ENCODE measurements at regions of chr2 and their contacts with region 1.

Region 1: DNA sequence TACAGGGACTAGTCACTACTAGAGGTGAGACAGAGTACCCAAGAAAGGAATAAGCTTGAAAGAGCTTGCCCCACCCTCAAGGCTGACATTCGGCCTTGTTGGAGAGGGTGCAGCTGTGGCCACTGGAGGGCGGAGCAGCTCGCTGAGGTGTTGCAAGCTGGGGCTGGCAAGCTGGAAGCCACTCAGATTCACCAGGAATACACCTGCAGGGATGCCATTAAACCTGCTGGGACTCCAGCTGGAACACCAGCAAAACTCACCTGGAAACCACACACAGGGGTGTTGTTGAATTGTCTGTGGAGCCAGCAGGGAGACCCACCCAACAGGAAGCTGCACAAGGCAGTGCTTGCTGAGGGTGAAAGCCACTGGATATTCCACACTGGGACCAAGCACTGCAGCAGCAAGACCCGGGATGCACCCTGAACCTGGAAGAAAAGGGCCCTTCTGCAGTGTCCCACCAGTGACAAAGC is 26.1 kb downstream of the KCTD18 start:
- DNase-seq: no peak
- H3K4me3 ChIP-seq: no peak overlapping the region
- H3K27ac ChIP-seq: no peak overlapping the region
- H3K4me1 ChIP-seq: peaks cover 23% of the 10 kb centered on the region
- H3K27me3 ChIP-seq: no peaks in the 10 kb centered on the region
- CTCF ChIP-seq: peak in 1 of 3 experiments; percentile 20
- POLR2A ChIP-seq: no peak

Region 2: GRCh38 chr2:199979832-199980628 is 503.7 kb before region 1 on chr2:
- intact Hi-C with region 1: loop called (anchors 5 kb)
- DNase-seq: no peak
- H3K4me3 ChIP-seq: no peak overlapping the region
- H3K27ac ChIP-seq: no peak overlapping the region
- H3K4me1 ChIP-seq: no peaks in the 10 kb centered on the region
- H3K27me3 ChIP-seq: no peaks in the 10 kb centered on the region
- CTCF ChIP-seq: peak; percentile 64 to 88 (median 74)
- POLR2A ChIP-seq: no peak